CD8-positive, alpha-beta memory T cell (primary cell): ENCODE measurements at regions of chr19 and their contacts with region 1.

Region 1: GRCh38 chr19:17125715-17126677 is 50.4 kb downstream of the MYO9B start:
- DNase-seq: peak; percentile 74 to 92 (median 89)
- H3K4me3 ChIP-seq: peak overlapping the region; percentile 70
- H3K4me3 Mint-ChIP-seq: peak overlapping the region; percentile 79 to 95 (median 87)
- H3K27ac ChIP-seq: peak overlapping the region; percentile 86
- H3K27ac Mint-ChIP-seq: peak overlapping the region; percentile 95 to 100 (median 99)
- H3K4me1 ChIP-seq: peaks cover 41% of the 10 kb centered on the region
- H3K4me1 Mint-ChIP-seq: peaks cover 42 to 79% (median 63%) of the 10 kb centered on the region in 3 donors
- H3K27me3 ChIP-seq: no peaks in the 10 kb centered on the region
- H3K27me3 Mint-ChIP-seq: no peaks in the 10 kb centered on the region

Region 2: GRCh38 chr19:17075035-17075863 is 50.7 kb before region 1 on chr19 and contains the starts of genes HAUS8 and MYO9B:
- CTCF ChIA-PET with region 1: interaction called, 6 read pairs
- POLR2A ChIA-PET with region 1: interaction called, 19 read pairs
- DNase-seq: peak; percentile 100
- H3K4me3 ChIP-seq: peak within 1 kb of the TSS; percentile 86
- H3K4me3 Mint-ChIP-seq: peak within 1 kb of the TSS; percentile 96 to 100 (median 99)
- H3K27ac ChIP-seq: peak within 1 kb of the TSS; percentile 88
- H3K27ac Mint-ChIP-seq: peak within 1 kb of the TSS; percentile 90 to 99 (median 98)
- H3K4me1 ChIP-seq: peaks cover 43% of the 10 kb centered on the region
- H3K4me1 Mint-ChIP-seq: peaks cover 53 to 72% (median 58%) of the 10 kb centered on the region in 3 donors
- H3K27me3 ChIP-seq: no peaks in the 10 kb centered on the region
- H3K27me3 Mint-ChIP-seq: no peaks in the 10 kb centered on the region
- total RNA-seq, gene HAUS8: 33.4 to 36.4 TPM
- total RNA-seq, gene MYO9B: 104 to 108 TPM

Region 3: GRCh38 chr19:17090583-17090982 is 35.4 kb before region 1 on chr19:
- CTCF ChIA-PET with region 1: no interaction called
- POLR2A ChIA-PET with region 1: no interaction called
- DNase-seq: peak in 1 of 5 donors; percentile 37
- H3K4me3 ChIP-seq: no peak overlapping the region
- H3K4me3 Mint-ChIP-seq: peak overlapping the region in 3 of 7 donors; percentile 16 to 48 (median 27)
- H3K27ac ChIP-seq: no peak overlapping the region
- H3K27ac Mint-ChIP-seq: peak overlapping the region in 6 of 8 donors; percentile 17 to 75 (median 64)
- H3K4me1 ChIP-seq: peaks cover 36% of the 10 kb centered on the region
- H3K4me1 Mint-ChIP-seq: peaks cover 43 to 85% (median 52%) of the 10 kb centered on the region in 3 donors
- H3K27me3 ChIP-seq: no peaks in the 10 kb centered on the region
- H3K27me3 Mint-ChIP-seq: no peaks in the 10 kb centered on the region

Region 4: GRCh38 chr19:17170538-17171297 is 44.7 kb after region 1 on chr19:
- CTCF ChIA-PET with region 1: no interaction called
- POLR2A ChIA-PET with region 1: interaction called, 11 read pairs
- DNase-seq: no peak
- H3K4me3 ChIP-seq: no peak overlapping the region
- H3K4me3 Mint-ChIP-seq: no peak overlapping the region
- H3K27ac ChIP-seq: no peak overlapping the region
- H3K27ac Mint-ChIP-seq: peak overlapping the region in 5 of 8 donors; percentile 11 to 81 (median 57)
- H3K4me1 ChIP-seq: no peaks in the 10 kb centered on the region
- H3K4me1 Mint-ChIP-seq: no peaks in the 10 kb centered on the region
- H3K27me3 ChIP-seq: no peaks in the 10 kb centered on the region
- H3K27me3 Mint-ChIP-seq: no peaks in the 10 kb centered on the region

Region 5: DNA sequence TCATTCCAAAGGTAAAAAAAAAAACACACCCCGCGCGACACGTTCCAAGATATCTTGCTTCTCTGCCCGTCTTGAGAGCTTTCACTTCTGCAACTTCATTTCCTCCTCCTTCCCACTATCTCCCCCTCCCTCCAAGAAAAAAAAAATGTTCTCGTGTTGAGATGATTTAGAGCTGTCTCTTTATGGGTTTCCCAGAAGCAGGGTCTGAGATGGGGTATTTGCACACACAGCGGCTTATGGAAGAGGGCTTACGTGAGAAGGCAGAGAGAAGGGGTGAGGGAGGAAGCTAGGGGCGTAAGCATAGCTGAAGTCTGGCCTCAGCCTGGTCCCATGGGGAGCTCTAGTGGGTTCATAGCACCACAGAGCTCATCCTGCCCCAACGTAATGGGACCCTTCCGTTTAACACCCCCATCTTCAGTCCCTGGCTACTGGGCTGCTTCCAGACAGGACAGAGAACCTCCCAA is 57.9 kb after region 1 on chr19:
- CTCF ChIA-PET with region 1: interaction called, 9 read pairs
- POLR2A ChIA-PET with region 1: interaction called, 14 read pairs
- DNase-seq: peak in 2 of 5 donors; percentile 22 to 33
- H3K4me3 ChIP-seq: peak overlapping the region; percentile 70
- H3K4me3 Mint-ChIP-seq: peak overlapping the region; percentile 78 to 91 (median 90)
- H3K27ac ChIP-seq: peak overlapping the region; percentile 58
- H3K27ac Mint-ChIP-seq: peak overlapping the region; percentile 84 to 99 (median 96)
- H3K4me1 ChIP-seq: peaks cover 21% of the 10 kb centered on the region
- H3K4me1 Mint-ChIP-seq: peaks cover 21 to 30% (median 25%) of the 10 kb centered on the region in 3 donors
- H3K27me3 ChIP-seq: no peaks in the 10 kb centered on the region
- H3K27me3 Mint-ChIP-seq: no peaks in the 10 kb centered on the region